ENCODE measurements at regions of chr9 and their contacts with region 1.

Region 1: GRCh38 chr9:16417161-16417560 is 453.3 kb downstream of the BNC2 start:
- DNase-seq: no peak
- ATAC-seq: no peak
- H3K4me3 Mint-ChIP-seq: no peak overlapping the region
- H3K27ac Mint-ChIP-seq: no peak overlapping the region
- H3K4me1 Mint-ChIP-seq: peaks cover 3% of the 10 kb centered on the region
- H3K27me3 Mint-ChIP-seq: peaks cover 3% of the 10 kb centered on the region

Region 2: DNA sequence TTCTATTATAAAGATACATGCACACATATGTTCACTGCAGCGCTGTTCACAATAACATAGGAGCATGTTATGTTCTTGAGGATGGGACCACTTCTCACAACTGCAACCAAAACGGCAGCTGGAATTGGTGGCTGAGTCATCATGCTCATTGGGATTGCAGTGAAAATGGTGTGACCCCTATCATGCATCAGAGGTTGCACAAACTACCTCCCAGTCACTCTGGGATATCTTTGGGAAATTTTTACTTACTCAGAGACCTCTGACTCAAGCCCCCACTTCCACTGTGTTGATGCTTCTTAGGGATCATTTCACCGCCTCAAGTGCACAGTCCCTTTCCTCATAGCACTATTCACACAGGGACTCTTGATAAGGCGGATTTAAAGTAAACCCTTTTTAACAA is 20.8 kb before region 1 on chr9:
- CTCF ChIA-PET with region 1: no interaction called
- POLR2A ChIA-PET with region 1: no interaction called
- intact Hi-C with region 1: loop called in 1 of 2 experiments (anchors 1 kb)
- DNase-seq: no peak
- ATAC-seq: no peak
- H3K4me3 Mint-ChIP-seq: no peak overlapping the region
- H3K27ac Mint-ChIP-seq: no peak overlapping the region
- H3K4me1 Mint-ChIP-seq: no peaks in the 10 kb centered on the region
- H3K27me3 Mint-ChIP-seq: peaks cover 4% of the 10 kb centered on the region

Measured in activated CD4-positive, alpha-beta T cell treated with anti-CD3 and anti-CD28 coated beads for 36 hours (primary cell).